OCI-LY7 (cell line): ENCODE measurements at regions of chr9 and their contacts with region 1.

Region 1: DNA sequence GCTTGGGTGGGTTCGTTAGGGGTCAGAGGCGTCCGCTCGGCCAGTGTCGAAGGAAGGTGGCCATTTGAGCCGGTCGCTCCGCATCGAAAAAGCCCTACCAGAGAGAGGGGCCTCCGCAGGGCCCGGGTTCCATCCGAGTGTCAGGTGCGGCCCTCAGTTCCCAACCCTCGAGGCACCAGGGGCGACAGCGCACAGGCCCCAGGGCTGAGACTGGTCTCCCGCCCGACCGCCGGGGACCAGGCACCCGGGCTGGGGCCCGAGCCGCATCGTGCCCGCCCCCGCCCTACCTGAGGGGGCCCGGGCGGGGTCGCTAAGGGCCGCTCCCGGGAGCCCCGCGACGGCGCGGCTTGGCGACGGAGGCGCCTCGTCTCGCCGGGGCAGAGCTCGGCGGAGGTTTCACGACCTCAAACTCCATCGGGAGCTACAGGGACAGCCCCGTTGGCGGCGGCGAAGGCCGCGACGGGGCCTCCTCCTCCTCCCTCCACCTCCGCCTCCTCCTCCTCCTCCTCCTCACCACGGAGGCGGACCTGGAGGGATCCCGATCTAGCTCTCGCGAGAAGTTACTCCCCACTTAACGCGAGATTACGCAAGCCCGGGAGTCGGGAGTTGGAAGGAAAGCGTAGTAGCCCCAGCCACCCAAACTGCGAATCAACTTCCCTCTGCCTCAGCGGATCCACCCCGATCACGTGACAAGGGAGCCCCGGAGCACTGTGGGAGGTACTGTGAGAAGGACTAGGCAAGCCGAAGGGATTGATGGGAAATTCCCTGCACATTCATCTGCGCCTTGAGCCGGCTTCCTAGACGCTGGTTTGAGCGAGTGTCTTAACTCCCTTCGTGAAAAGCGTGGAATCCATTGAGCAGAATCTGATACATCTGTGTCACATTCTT is at the start of gene RC3H2:
- DNase-seq: peak; percentile 100
- H3K4me3 ChIP-seq: peak within 1 kb of the TSS; percentile 82
- H3K27ac ChIP-seq: peak within 1 kb of the TSS; percentile 75
- H3K4me1 ChIP-seq: peaks cover 35% of the 10 kb centered on the region
- CTCF ChIP-seq: no peak
- total RNA-seq, gene RC3H2: 45.0 and 46.2 TPM in 2 replicates

Region 2: GRCh38 chr9:122923947-122924346 is 18.9 kb after region 1 on chr9:
- CTCF ChIA-PET with region 1: no interaction called
- POLR2A ChIA-PET with region 1: interaction called, 10 read pairs
- intact Hi-C with region 1: no loop called
- DNase-seq: peak; percentile 62
- H3K4me3 ChIP-seq: peak overlapping the region; percentile 28
- H3K27ac ChIP-seq: peak overlapping the region; percentile 51
- H3K4me1 ChIP-seq: peaks cover 16% of the 10 kb centered on the region
- CTCF ChIP-seq: no peak

Region 3: DNA sequence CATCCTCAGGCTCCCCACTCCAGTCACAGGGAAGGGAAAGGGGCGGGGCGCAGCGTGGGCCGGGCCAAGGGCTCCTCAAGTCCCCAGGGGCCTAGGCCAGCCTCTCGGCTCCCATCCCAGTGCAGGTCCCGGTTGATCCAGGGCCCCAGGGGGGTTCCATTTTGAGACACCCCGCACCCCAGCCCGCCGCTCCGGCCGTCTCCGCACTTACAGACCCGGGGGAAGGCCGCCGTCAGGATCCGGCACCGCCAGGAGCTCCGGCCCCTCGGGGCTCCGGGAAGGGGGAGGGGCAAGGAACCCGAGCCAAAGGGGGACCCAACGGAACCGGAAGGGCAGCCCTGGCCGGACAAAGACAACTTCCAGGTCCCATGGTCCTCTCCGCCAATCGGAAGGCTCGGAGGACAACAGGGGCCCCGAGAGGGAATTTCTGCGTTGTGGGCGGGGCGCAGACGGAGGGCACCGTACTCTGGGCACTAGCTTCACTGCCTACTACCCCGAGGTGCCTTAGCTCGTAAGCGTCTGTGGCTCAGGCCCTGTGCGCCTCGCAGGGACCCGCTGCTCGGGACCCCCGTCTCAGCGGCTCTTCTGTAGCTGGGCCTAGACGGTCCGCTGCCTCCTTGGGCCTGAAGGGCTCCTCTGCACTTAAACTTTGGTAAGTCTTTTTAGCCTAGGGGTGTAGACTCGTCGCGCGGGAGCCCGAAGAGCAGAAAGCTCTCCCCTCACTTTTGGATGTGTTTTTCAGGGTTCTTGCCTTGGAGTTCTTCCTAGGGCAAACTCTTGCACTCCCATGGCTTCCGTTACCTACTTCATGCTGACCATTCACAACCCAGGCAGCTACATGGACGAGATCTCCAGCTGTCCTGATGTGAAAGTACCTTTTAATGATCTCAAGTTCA is 26.4 kb after region 1 on chr9 and contains the start of gene ZBTB26:
- CTCF ChIA-PET with region 1: no interaction called
- POLR2A ChIA-PET with region 1: interaction called, 29 read pairs
- intact Hi-C with region 1: no loop called
- DNase-seq: peak; percentile 94
- H3K4me3 ChIP-seq: peak within 1 kb of the TSS; percentile 85
- H3K27ac ChIP-seq: peak within 1 kb of the TSS; percentile 70
- H3K4me1 ChIP-seq: peaks cover 19% of the 10 kb centered on the region
- CTCF ChIP-seq: no peak
- total RNA-seq, gene ZBTB26: 7.6 and 10.8 TPM in 2 replicates

Region 4: DNA sequence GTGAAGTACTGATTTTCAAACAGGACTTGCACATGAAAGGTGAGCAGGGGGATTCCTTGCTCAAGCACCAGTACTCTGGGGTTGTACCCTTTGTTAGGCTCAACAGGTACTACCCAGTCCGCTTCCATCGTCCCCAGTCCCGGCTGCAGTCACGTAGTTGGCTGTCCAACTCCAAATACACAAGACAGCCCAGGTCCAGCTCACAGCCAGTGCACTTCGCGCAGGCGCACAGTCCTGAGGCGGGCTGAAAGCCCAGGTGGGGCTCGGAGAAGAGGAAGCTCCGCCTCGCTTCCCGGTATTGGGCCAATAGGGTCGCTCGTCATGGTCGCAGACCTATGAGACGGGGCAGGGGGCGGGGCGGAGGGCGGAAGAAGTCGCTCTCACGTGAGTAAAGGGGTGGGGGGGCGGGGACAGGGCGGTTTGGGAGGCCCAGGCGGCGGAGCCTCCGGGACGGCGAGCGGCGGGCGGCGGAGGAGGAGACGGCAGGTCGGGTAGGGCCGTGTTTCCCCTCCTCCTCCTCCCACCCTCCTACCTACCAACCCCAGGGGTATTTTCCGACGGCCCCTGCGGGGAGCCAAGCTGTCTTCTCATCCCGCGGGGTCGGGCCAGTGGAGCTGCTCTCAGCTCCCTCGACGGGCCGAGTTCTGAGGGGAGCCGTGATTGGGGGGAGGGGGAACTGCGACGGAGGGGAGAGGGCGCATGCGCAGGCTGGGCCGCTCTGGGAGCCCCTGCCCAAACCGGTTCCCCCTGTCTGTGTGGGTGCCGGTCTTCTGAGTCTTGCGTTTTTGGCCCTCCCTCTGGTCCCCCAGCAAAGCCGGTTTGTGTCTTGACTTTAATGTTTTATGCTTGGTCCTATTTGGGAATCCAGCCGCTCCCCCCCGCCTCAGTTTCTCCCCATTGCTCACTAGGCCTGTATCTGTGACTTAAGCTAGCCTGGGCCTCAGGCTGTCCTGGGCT is 35.8 kb after region 1 on chr9 and contains the start of gene RABGAP1:
- CTCF ChIA-PET with region 1: no interaction called
- POLR2A ChIA-PET with region 1: interaction called, 30 read pairs
- intact Hi-C with region 1: loop called (anchors 2 kb)
- DNase-seq: peak; percentile 99
- H3K4me3 ChIP-seq: peak within 1 kb of the TSS; percentile 92
- H3K27ac ChIP-seq: peak within 1 kb of the TSS; percentile 54
- H3K4me1 ChIP-seq: peaks cover 32% of the 10 kb centered on the region
- CTCF ChIP-seq: no peak
- total RNA-seq, gene RABGAP1: 16.8 and 24.2 TPM in 2 replicates

Region 5: DNA sequence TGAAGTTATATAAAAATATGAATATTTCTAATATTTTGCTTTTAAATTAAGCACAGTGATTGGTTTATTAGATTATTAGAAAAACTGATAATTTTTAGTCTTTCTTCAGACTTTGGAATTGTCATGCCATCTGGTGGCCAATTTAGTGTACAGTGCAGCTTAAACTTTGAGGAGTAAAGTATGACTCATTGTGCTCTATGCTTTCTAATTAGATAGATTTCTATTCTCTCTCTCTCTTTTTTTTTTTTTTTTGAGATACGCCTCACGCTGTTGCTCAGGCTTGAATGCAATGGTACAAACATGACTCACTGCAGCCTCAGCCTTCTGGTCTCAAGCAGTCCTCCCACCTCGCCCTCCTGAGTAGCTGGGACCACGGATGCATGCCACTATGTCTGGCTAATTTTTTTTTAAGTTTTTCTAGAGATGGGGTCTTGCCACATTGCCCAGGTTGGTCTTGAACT is 86.3 kb after region 1 on chr9:
- CTCF ChIA-PET with region 1: no interaction called
- POLR2A ChIA-PET with region 1: no interaction called
- intact Hi-C with region 1: loop called (anchors 1 kb)
- DNase-seq: peak; percentile 51
- H3K4me3 ChIP-seq: no peak overlapping the region
- H3K27ac ChIP-seq: no peak overlapping the region
- H3K4me1 ChIP-seq: no peaks in the 10 kb centered on the region
- CTCF ChIP-seq: peak; percentile 95

Region 6: DNA sequence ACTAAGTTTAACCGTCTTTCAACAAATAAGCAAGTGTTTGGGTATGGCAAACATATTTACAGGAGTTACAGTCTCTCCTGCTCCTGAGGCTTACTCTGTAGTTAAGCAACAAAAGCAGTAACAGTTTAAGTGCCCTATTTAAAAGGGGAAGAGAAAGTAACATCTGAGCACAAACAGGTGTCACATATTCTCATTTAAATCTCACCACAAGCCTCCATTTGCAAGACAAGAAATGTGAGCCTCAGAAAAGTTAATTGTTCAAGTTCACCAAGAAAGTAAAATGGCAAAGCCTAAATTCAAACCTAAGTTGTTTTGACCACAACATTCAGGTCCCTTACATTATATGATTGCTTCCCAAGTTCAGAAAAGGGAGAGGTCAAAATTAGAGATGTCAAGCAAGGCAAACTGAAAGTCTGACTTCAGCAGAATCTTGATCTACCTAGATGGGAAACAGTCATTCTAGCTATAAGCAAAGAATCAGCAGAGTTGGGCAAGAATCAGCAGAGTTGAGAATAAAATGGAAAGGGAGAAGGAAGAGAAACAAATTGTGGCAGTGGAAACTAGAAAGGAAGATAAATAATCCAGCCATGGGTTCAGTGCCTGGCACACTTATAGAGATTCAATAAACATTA is 269.9 kb after region 1 on chr9:
- CTCF ChIA-PET with region 1: no interaction called
- POLR2A ChIA-PET with region 1: no interaction called
- intact Hi-C with region 1: loop called (anchors 5 kb)
- DNase-seq: peak; percentile 93
- H3K4me3 ChIP-seq: peak overlapping the region; percentile 55
- H3K27ac ChIP-seq: peak overlapping the region; percentile 99
- H3K4me1 ChIP-seq: peaks cover 99% of the 10 kb centered on the region
- CTCF ChIP-seq: no peak